Right lobe of liver (tissue), 6 donors: ENCODE measurements at regions of chr19 and their contacts with region 1.

Region 1: DNA sequence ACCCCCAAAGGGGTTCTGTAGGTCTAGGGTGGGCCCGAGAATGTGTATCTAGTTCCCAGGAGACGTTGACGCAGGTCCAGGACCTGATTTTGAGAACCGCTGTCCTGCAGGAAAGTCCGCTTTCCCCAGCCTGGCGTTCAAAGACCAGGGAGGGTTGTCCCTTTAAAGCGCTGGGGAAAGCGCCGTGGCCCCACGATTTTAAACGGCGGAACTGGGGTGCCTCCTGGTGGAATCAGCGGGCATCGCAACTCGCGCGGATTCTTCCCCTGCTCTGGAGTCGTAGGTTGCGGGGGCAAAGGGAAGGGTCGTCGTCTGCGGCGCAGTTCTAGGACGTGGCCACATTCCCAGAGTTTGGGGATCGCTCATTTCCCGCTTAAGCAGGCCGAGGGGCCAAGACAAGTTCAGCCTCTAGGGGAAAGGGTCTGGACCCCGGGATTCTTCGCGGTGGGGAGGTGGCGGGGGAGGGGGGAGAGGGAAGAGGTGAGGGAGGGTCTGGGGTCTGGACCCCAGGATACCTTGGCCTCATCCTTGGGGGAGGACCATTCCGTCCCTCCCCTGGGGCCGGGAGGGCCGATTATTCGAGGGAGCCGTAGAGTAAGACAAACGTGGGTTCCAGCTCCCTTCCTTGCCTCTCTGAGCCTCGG is 7.7 kb downstream of the PNMA8B start:
- DNase-seq: peak; percentile 72 to 74 (median 73)
- ATAC-seq: peak; percentile 80 to 88 (median 88)
- H3K4me3 ChIP-seq: peak overlapping the region in 1 of 3 donors; percentile 10
- H3K27ac ChIP-seq: no peak overlapping the region
- H3K4me1 ChIP-seq: peaks cover 0 to 12% (median 0%) of the 10 kb centered on the region in 4 donors
- H3K27me3 ChIP-seq: peaks cover 0 to 11% of the 10 kb centered on the region in 2 donors
- CTCF ChIP-seq: peak; percentile 77 to 96 (median 88)
- POLR2A ChIP-seq: no peak

Region 2: GRCh38 chr19:46346821-46347571 is 140.9 kb before region 1 on chr19 and contains the start of gene PPP5C:
- intact Hi-C with region 1: no loop called
- DNase-seq: peak; percentile 92 to 93 (median 92)
- ATAC-seq: peak; percentile 85 to 90 (median 86)
- H3K4me3 ChIP-seq: peak within 1 kb of the TSS; percentile 89 to 100 (median 93)
- H3K27ac ChIP-seq: peak within 1 kb of the TSS; percentile 79 to 88 (median 83)
- H3K4me1 ChIP-seq: peaks cover 0 to 32% (median 12%) of the 10 kb centered on the region in 4 donors
- H3K27me3 ChIP-seq: no peaks in the 10 kb centered on the region
- CTCF ChIP-seq: peak; percentile 65 to 79 (median 66)
- POLR2A ChIP-seq: peak; percentile 70
- total RNA-seq, gene PPP5C: 23.9 to 47.8 (median 36.0) TPM

Region 3: GRCh38 chr19:46402725-46403124 is 85.2 kb before region 1 on chr19:
- intact Hi-C with region 1: loop called in 1 of 2 experiments (anchors 2 kb)
- DNase-seq: peak in 1 of 3 donors; percentile 47
- ATAC-seq: no peak
- H3K4me3 ChIP-seq: no peak overlapping the region
- H3K27ac ChIP-seq: no peak overlapping the region
- H3K4me1 ChIP-seq: no peaks in the 10 kb centered on the region
- H3K27me3 ChIP-seq: no peaks in the 10 kb centered on the region
- CTCF ChIP-seq: no peak
- POLR2A ChIP-seq: no peak

Region 4: DNA sequence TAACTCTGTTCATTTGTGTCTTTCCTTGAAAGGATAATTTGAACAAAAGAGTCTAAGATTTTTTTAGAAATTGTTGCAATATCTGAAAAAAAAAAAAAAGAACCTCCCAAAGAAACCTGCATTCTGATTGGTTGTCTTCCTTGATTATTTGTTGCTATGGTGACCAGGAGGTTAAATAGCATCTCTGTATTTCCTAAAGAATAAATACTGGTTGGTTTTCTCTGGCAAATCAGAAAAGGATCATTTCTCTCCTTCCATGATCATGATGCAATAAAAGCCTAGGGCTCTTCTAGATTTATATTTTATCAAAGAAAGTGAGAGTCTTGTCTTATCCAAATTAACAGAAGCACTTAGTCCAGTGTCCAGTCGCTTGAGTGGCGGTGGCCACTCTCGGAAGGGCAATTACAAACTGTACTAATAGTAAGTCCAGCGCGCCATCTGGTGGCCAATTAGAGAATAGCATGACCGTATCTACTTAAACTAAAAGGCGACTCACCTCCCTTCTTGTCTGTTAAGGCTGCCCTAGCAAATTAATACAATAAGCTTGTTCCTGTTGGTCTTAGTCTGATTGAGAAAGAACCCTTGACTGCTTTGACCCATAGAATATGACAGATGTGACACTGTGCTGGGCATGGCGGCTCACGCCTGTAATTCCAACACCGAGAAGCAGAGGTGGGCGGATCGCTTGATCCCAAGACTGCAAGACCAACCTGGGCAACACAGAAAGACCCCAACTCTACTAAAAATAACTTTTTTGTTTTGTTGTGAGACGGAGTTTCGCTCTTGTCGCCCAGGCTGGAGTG is 54.7 kb after region 1 on chr19:
- intact Hi-C with region 1: no loop called
- DNase-seq: peak; percentile 88 to 90 (median 90)
- ATAC-seq: peak; percentile 90 to 94 (median 90)
- H3K4me3 ChIP-seq: no peak overlapping the region
- H3K27ac ChIP-seq: no peak overlapping the region
- H3K4me1 ChIP-seq: no peaks in the 10 kb centered on the region
- H3K27me3 ChIP-seq: no peaks in the 10 kb centered on the region
- CTCF ChIP-seq: peak; percentile 86 to 94 (median 92)
- POLR2A ChIP-seq: no peak